ENCODE measurements at regions of chr5 and their contacts with region 1.

Region 1: DNA sequence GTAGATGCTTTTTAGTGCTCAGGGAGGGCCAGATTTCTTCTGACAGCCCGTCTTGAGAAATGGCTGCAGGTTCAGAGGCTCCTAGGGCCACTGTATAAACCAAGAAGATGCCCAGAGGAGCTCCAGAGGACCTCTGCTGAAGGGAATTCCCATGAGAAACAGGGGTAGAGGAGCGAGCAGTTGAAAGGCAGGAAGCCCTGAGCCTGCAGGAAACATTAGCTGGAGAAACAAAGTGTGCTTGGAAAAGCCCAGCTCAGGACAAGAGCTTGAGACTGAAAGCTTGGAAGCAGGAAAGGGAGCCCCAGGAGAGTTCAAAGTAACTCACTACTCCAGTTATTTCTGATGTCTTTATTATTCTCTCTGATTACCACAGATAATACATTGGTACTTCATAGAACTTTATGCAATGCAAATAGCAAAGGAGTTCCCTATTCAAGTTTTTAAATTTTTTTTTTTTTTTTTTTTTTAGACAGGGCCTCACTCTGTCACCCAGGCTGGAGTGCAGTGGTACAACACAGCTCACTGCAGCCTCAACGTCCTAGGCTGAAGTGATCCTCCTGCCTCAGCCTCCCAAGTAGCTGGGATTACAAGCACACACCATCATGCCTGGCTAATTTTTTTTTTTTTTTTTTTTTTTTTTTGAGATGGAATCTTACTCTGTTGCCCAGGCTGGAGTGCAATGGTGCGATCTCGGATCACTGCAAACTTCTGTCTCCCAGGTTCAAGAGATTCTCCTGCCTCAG is 16.5 kb downstream of the HBEGF start:
- DNase-seq: peak in 1 of 2 donors; percentile 49
- ATAC-seq: peak; percentile 36 to 89 (median 80)
- H3K4me3 ChIP-seq: no peak overlapping the region
- H3K27ac ChIP-seq: peak overlapping the region in 8 of 10 donors; percentile 7 to 79 (median 46)
- H3K4me1 ChIP-seq: peaks cover 3 to 60% (median 22%) of the 10 kb centered on the region in 9 donors
- H3K27me3 ChIP-seq: no peaks in the 10 kb centered on the region
- CTCF ChIP-seq: no peak

Region 2: DNA sequence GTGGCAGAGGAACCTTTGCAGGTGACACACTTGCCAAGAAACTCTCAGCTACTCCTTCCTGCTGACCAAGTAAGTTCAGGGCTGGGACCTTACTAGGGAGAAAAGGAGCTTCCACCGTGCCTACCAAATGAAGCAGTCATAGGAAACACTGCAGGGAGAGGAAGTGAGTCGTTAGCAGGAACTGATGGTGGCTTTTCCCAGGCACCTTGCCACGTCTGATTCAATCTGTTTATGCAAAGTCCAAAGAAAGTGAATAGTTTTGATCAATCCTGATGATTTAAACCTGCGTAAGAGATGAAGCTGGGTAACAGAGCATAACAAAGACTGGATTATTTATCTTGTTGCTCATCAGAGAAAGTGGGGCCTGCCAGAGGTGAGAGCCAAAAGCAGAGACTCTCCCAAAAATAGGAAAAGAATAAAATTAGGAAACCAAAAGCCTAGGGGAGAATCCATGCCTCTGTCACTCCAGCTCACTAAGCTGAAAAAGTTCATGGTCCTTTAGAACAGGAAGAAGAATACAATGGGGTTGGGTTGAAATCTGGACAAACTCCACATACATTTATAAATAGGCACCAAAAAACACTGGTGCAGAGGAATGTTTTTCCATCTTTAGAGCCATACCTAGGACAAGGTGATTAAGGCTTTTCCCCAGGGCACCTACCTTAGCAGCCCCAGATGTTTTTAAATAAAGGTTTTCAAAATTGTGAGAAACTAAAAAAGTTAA is 17.7 kb before region 1 on chr5:
- intact Hi-C with region 1: loop called in 1 of 10 experiments (anchors 1 kb)
- DNase-seq: peak in 1 of 2 donors; percentile 72
- ATAC-seq: peak; percentile 65 to 91 (median 82)
- H3K4me3 ChIP-seq: peak overlapping the region in 3 of 10 donors; percentile 5 to 13 (median 11)
- H3K27ac ChIP-seq: peak overlapping the region in 9 of 10 donors; percentile 64 to 87 (median 79)
- H3K4me1 ChIP-seq: peaks cover 4 to 46% (median 32%) of the 10 kb centered on the region in 9 donors
- H3K27me3 ChIP-seq: no peaks in the 10 kb centered on the region
- CTCF ChIP-seq: no peak

Measured in heart right ventricle (tissue), 16 donors.